Tibial artery (tissue), 4 donors: ENCODE measurements at regions of chr11 and their contacts with region 1.

Region 1: DNA sequence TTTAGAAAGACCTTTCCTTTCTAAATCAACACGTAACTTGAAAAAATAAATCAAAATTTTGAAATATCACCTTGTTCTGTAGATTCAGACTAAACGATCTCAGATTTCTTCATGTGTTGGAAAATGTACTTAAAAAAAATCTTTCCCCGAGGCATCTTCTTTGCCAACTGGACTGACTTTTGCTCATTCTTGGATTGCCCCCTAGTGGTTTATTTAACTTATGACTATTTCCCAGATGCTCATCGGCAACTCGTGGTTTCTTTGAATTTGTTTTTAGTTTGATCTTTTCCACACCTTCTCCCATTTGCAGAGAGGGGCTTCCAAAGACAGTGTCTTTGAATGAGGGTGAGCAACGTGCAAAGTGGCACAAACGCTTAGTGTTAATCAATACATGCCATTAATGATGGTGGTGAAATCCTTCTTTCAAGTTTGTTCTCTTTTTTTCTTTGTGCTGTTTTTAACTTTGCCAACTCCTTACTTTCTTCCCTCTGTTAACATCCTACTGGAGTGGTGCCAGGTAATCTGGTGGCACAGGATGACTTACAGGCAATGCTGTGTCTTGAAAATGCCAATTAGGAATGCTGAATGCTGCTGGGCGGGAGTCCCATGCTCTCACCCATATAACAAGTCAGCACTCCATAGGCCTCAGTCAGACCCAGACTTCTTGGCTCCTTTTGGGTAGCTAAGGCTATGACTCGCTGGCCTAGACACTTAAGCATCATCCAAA is 18.3 kb downstream of the PRSS23 start:
- DNase-seq: no peak
- H3K4me3 ChIP-seq: no peak overlapping the region
- H3K27ac ChIP-seq: peak overlapping the region; percentile 86 to 87
- H3K4me1 ChIP-seq: peaks cover 4 to 54% (median 43%) of the 10 kb centered on the region in 4 donors
- H3K27me3 ChIP-seq: no peaks in the 10 kb centered on the region
- CTCF ChIP-seq: peak; percentile 66 to 89

Region 2: DNA sequence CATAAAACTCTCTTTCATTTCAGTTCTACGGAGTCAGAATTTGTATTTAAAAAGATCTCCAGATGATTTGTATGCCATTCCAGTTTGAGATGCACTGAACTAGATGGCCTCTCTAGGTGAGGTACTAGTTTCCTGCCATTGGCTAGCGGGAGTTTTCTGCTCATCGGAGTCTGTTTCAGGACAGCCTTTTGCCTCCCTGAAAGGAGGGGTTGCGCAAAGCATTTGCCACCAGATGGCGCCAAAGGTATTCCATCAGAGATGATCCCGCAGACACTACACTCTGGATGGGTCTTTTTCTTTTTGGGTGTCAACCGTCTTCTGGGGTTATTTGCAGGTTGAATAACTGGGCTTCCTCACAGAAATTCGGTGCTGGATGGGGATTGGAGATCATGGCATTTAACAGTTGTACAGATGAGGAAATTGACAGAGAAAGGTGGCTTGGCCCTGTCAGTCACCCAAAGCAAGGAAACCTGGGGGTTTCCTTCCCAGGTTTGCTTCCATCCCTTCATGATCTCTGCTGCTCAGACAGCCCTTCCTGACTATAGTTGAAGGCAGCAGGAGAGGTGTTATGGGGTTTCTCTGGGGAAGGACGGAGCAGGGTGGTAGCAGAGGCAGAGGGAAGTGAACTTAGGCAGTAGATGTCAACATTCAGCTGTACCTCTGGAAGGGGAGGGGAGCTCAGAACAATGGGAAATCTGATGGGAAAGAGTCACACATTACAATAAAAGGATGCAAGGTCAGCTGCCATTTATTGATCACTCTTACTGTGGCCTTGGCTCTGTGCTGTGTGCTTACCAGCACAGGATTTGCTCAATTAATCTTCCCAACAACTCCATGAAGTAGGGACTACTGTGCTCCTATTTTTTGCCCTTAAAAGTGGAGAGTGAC is 362.3 kb before region 1 on chr11:
- intact Hi-C with region 1: loop called (anchors 1 kb)
- DNase-seq: peak; percentile 89 to 90
- H3K4me3 ChIP-seq: no peak overlapping the region
- H3K27ac ChIP-seq: peak overlapping the region; percentile 57 to 64
- H3K4me1 ChIP-seq: peaks cover 0 to 45% (median 41%) of the 10 kb centered on the region in 4 donors
- H3K27me3 ChIP-seq: no peaks in the 10 kb centered on the region
- CTCF ChIP-seq: peak; percentile 86 to 92

Region 3: DNA sequence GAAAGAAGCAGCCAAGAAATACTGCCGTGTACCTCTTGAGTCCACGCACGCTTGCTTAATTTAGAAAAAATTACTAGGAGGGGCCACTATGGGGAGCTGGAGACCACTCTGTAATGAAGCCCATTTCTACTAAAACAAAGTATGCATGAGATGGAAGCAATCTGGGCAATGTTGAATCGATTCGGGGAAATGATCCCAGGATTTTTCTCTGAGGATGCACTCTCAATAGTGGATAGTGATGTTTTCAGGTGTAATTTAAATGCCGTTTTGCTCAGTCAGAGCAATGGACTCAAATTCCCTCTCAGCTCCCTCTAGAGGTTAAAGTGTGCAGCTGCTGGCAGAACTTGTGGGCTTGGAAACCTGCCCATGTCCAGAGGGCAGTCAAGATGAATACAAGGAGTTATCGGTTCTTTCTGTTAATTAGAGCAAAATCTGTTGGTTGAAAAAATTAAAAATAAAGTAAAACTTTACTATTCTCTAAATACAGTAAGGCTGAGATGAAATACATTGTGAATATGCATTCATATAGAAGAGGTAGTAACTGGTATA is 210.3 kb before region 1 on chr11:
- intact Hi-C with region 1: loop called (anchors 5 kb)
- DNase-seq: peak; percentile 58 to 79
- H3K4me3 ChIP-seq: peak overlapping the region; percentile 21 to 25
- H3K27ac ChIP-seq: peak overlapping the region; percentile 42 to 44
- H3K4me1 ChIP-seq: peaks cover 0 to 33% (median 22%) of the 10 kb centered on the region in 4 donors
- H3K27me3 ChIP-seq: no peaks in the 10 kb centered on the region
- CTCF ChIP-seq: peak; percentile 90 to 92